ENCODE measurements at regions of chr14 and their contacts with region 1.

Region 1: DNA sequence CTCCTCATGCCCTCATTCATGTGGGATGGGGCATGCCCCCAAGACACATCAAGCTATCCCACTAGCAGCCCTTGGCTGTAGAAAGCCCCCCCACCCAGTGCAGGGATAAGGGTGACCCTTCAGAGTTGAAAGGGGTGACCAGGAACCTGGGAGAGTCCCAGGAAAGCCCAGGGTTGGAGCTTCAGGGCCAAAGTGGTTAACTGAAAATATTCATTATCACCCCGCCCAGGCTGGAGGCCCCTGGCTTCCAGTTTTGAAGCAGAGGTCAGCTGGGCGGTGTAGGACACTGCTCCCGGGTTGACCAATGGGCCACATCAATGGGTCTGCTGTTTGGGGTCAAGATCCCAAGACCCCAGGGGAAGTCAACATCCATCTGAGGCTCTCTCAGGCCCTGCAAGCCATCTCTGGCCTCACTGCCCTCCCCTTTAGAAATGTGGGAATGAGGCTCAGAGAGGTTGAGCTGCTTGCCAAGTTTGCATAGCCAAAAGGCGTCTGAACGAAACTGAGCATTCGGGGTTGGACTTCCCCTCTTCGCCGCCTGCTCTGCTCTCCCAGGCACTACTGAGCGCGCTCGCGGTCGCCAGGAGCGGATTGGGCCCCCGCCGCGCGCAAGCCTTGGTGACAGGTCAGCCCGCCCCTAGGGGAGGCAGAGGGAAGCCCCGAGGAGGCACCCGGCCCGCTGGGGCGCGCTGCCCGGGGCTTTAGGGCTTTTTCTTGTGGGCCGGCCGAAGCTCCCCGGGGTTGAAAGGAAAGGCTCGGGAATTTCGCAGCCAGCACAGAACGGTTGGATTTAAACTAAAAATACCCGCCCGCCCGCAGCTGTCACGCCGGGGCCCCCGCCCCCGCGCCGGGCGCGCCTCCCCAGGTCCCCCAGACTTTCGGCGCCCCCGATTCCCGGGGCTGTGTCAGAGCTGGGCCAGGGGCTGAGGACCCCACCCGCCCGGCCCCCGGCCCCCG is 576 bp downstream of the SYNE3 start:
- DNase-seq: peak; percentile 80 to 93 (median 83)
- H3K4me3 ChIP-seq: peak overlapping the region; percentile 81 to 98
- H3K4me3 Mint-ChIP-seq: peak overlapping the region; percentile 91 to 96 (median 95)
- H3K27ac ChIP-seq: peak overlapping the region; percentile 83
- H3K27ac Mint-ChIP-seq: peak overlapping the region; percentile 95 to 97 (median 96)
- H3K4me1 ChIP-seq: peaks cover 74% of the 10 kb centered on the region
- H3K4me1 Mint-ChIP-seq: peaks cover 55 to 84% (median 71%) of the 10 kb centered on the region in 4 donors
- H3K27me3 ChIP-seq: no peaks in the 10 kb centered on the region
- H3K27me3 Mint-ChIP-seq: no peaks in the 10 kb centered on the region

Region 2: GRCh38 chr14:95157327-95158189 is 358.3 kb before region 1 on chr14 and contains the start of gene DICER1:
- CTCF ChIA-PET with region 1: no interaction called
- POLR2A ChIA-PET with region 1: interaction called, 3 read pairs
- intact Hi-C with region 1: loop called (anchors 5 kb)
- DNase-seq: peak; percentile 88 to 96 (median 92)
- H3K4me3 ChIP-seq: peak within 1 kb of the TSS; percentile 73 to 88
- H3K4me3 Mint-ChIP-seq: peak within 1 kb of the TSS; percentile 95 to 99 (median 98)
- H3K27ac ChIP-seq: peak within 1 kb of the TSS; percentile 83
- H3K27ac Mint-ChIP-seq: peak within 1 kb of the TSS; percentile 98 to 100 (median 99)
- H3K4me1 ChIP-seq: peaks cover 44% of the 10 kb centered on the region
- H3K4me1 Mint-ChIP-seq: peaks cover 33 to 50% (median 39%) of the 10 kb centered on the region in 4 donors
- H3K27me3 ChIP-seq: no peaks in the 10 kb centered on the region
- H3K27me3 Mint-ChIP-seq: no peaks in the 10 kb centered on the region
- total RNA-seq, gene DICER1: 58.8 to 62.8 TPM

Region 3: GRCh38 chr14:95460647-95461478 is 55.0 kb before region 1 on chr14:
- CTCF ChIA-PET with region 1: interaction called, 845 read pairs
- POLR2A ChIA-PET with region 1: interaction called, 185 read pairs
- intact Hi-C with region 1: loop called (anchors 1 kb)
- DNase-seq: no peak
- H3K4me3 ChIP-seq: no peak overlapping the region
- H3K4me3 Mint-ChIP-seq: no peak overlapping the region
- H3K27ac ChIP-seq: peak overlapping the region; percentile 53
- H3K27ac Mint-ChIP-seq: peak overlapping the region; percentile 96 to 98 (median 97)
- H3K4me1 ChIP-seq: peaks cover 66% of the 10 kb centered on the region
- H3K4me1 Mint-ChIP-seq: peaks cover 42 to 71% (median 59%) of the 10 kb centered on the region in 4 donors
- H3K27me3 ChIP-seq: no peaks in the 10 kb centered on the region
- H3K27me3 Mint-ChIP-seq: no peaks in the 10 kb centered on the region

Region 4: GRCh38 chr14:95480109-95480886 is 35.6 kb before region 1 on chr14:
- CTCF ChIA-PET with region 1: interaction called, 4 read pairs
- POLR2A ChIA-PET with region 1: interaction called, 19 read pairs
- intact Hi-C with region 1: no loop called
- DNase-seq: peak; percentile 49 to 85 (median 57)
- H3K4me3 ChIP-seq: no peak overlapping the region
- H3K4me3 Mint-ChIP-seq: peak overlapping the region in 7 of 8 donors; percentile 28 to 74 (median 68)
- H3K27ac ChIP-seq: peak overlapping the region; percentile 61
- H3K27ac Mint-ChIP-seq: peak overlapping the region; percentile 88 to 98 (median 95)
- H3K4me1 ChIP-seq: peaks cover 51% of the 10 kb centered on the region
- H3K4me1 Mint-ChIP-seq: peaks cover 32 to 72% (median 53%) of the 10 kb centered on the region in 4 donors
- H3K27me3 ChIP-seq: no peaks in the 10 kb centered on the region
- H3K27me3 Mint-ChIP-seq: no peaks in the 10 kb centered on the region

Region 5: GRCh38 chr14:95495538-95496025 is 20.3 kb before region 1 on chr14:
- CTCF ChIA-PET with region 1: interaction called, 7 read pairs
- POLR2A ChIA-PET with region 1: interaction called, 14 read pairs
- intact Hi-C with region 1: no loop called
- DNase-seq: peak in 2 of 5 donors; percentile 18 to 52
- H3K4me3 ChIP-seq: no peak overlapping the region
- H3K4me3 Mint-ChIP-seq: peak overlapping the region in 7 of 8 donors; percentile 39 to 73 (median 69)
- H3K27ac ChIP-seq: peak overlapping the region; percentile 50
- H3K27ac Mint-ChIP-seq: peak overlapping the region; percentile 84 to 96 (median 87)
- H3K4me1 ChIP-seq: peaks cover 61% of the 10 kb centered on the region
- H3K4me1 Mint-ChIP-seq: peaks cover 37 to 79% (median 64%) of the 10 kb centered on the region in 4 donors
- H3K27me3 ChIP-seq: no peaks in the 10 kb centered on the region
- H3K27me3 Mint-ChIP-seq: no peaks in the 10 kb centered on the region

Region 6: DNA sequence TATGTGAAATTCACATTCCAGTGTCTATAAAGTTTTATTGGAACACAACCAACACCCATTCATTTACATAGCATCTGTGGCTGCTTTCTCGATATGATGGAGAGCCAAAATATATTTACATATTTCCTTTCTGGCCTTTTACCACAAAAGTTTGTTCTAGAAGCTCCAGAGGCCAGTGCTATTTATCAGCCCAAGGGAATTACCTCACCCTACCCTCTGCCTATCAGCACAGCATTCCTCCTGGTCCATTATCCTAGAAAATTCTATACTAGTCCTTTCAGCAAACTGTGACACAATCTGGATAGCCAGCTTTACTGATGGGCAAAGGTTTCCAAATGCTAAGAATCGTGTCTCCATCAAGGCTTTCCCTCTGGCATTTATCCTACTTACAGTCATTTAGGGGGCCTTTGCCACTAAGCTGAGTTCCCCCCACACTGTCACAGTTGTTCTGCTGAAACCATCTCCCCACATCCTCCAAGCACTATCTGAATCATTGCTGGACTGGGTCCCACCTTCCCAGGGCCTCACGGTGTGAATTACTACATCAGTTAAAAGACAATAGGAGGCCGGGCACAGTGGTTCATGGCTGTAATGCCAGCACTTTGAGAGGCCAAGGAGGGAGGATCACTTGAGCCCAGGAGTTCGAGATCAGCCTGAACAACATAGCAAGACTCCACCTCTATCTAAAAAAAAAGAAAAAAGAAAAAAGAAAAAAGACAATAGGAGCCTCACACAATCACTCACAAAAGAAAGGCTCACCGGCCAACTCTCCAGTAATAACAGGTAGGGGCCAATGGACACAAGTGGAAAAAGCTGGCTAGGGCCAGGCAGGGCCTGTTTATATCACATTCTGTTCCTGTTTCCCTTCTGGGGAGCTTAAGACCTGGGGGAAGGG is 11.5 kb before region 1 on chr14:
- CTCF ChIA-PET with region 1: interaction called, 5 read pairs
- POLR2A ChIA-PET with region 1: interaction called, 13 read pairs
- intact Hi-C with region 1: no loop called
- DNase-seq: no peak
- H3K4me3 ChIP-seq: no peak overlapping the region
- H3K4me3 Mint-ChIP-seq: peak overlapping the region in 4 of 8 donors; percentile 8 to 66 (median 49)
- H3K27ac ChIP-seq: no peak overlapping the region
- H3K27ac Mint-ChIP-seq: peak overlapping the region; percentile 48 to 92 (median 76)
- H3K4me1 ChIP-seq: peaks cover 75% of the 10 kb centered on the region
- H3K4me1 Mint-ChIP-seq: peaks cover 58 to 91% (median 76%) of the 10 kb centered on the region in 4 donors
- H3K27me3 ChIP-seq: no peaks in the 10 kb centered on the region
- H3K27me3 Mint-ChIP-seq: no peaks in the 10 kb centered on the region

Region 7: DNA sequence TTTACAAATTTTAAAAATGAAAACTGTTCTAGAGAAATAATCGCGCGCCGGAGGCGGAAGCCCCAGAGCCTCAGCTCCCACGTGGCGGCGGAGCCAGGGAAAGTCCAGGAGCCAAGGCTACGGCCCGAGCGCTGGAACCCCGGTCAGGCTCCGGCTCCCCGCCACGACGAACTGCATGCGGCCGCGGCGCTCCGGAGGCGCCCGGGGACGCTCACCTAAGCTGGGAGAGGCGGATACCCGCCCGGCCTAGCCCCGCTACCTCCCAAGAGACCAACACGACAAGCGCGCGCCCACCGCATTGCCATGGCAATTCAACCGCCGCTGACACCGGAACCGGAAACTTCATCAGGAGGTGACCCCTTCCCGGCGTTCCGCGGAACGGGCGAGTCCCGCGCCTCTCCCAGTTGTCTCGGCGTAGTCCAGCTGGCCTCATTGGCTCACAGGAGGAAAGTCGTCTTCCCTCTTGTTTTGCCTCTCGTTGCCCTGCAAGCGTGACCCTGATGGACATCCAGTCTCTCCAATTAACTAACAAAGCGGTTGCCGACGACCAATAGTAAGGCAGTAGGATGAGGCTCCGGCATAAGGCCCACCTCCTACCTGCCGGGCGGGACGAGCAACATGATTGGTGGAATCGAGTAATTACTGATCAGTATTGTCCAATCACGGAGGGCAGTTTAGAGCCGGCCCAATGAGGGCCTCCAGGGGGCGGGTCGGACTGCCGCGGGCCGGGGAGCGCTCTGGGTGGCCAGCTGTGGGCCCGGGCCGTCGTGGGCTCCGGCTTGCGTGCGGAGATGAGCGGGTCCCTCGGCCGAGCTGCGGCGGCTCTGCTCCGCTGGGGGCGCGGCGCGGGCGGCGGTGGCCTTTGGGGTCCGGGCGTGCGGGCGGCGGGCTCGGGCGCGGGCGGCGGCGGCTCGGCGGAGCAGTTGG is 18.7 kb after region 1 on chr14 and contains the start of gene GLRX5:
- CTCF ChIA-PET with region 1: interaction called, 10 read pairs
- POLR2A ChIA-PET with region 1: interaction called, 39 read pairs
- intact Hi-C with region 1: loop called (anchors 1 kb)
- DNase-seq: peak; percentile 99 to 100 (median 99)
- H3K4me3 ChIP-seq: peak within 1 kb of the TSS; percentile 48 to 76
- H3K4me3 Mint-ChIP-seq: peak within 1 kb of the TSS; percentile 90 to 97 (median 96)
- H3K27ac ChIP-seq: peak within 1 kb of the TSS; percentile 77
- H3K27ac Mint-ChIP-seq: peak within 1 kb of the TSS; percentile 91 to 99 (median 95)
- H3K4me1 ChIP-seq: peaks cover 50% of the 10 kb centered on the region
- H3K4me1 Mint-ChIP-seq: peaks cover 52 to 87% (median 67%) of the 10 kb centered on the region in 4 donors
- H3K27me3 ChIP-seq: no peaks in the 10 kb centered on the region
- H3K27me3 Mint-ChIP-seq: no peaks in the 10 kb centered on the region
- total RNA-seq, gene GLRX5: 17.6 to 18.7 TPM

Region 8: DNA sequence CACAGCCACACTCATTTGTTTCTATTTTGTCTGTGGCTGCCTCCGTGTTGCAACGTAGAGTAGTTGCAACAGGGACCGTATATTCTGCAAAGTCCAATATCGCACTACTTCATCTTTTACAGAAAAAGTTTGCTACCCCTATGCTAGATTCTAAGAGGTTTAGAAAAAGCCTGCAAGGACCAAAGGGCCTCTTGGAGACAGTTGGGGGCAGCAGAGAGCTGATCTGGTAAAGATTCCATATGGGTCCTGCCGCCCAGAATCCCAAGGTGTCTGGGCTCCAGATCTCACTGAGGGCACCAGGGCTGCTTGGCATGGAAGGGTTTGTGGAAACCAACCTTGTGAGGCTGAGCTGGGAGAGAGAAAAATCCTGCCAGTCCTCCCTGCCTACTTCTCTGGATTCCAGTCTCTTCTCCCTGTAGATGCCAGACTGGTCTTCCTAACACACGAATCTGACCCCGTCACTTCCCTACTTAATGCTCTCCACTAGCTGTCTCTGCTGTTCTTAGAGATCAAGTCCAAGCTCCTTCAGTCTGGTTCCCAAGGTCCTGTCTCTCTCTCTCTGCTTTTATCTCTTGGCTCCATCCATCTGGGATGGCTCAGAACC is 93.6 kb after region 1 on chr14:
- CTCF ChIA-PET with region 1: no interaction called
- POLR2A ChIA-PET with region 1: no interaction called
- intact Hi-C with region 1: no loop called
- DNase-seq: no peak
- H3K4me3 ChIP-seq: no peak overlapping the region
- H3K4me3 Mint-ChIP-seq: no peak overlapping the region
- H3K27ac ChIP-seq: no peak overlapping the region
- H3K27ac Mint-ChIP-seq: no peak overlapping the region
- H3K4me1 ChIP-seq: no peaks in the 10 kb centered on the region
- H3K4me1 Mint-ChIP-seq: no peaks in the 10 kb centered on the region
- H3K27me3 ChIP-seq: no peaks in the 10 kb centered on the region
- H3K27me3 Mint-ChIP-seq: peaks cover 34 to 51% of the 10 kb centered on the region in 2 donors